ENCODE measurements at regions of chr16 and their contacts with region 1.

Region 1: GRCh38 chr16:3701531-3701930 is 15.8 kb downstream of the TRAP1 start:
- DNase-seq: no peak
- H3K4me3 Mint-ChIP-seq: no peak overlapping the region
- H3K27ac Mint-ChIP-seq: no peak overlapping the region
- H3K4me1 Mint-ChIP-seq: no peaks in the 10 kb centered on the region
- H3K27me3 Mint-ChIP-seq: no peaks in the 10 kb centered on the region

Region 2: DNA sequence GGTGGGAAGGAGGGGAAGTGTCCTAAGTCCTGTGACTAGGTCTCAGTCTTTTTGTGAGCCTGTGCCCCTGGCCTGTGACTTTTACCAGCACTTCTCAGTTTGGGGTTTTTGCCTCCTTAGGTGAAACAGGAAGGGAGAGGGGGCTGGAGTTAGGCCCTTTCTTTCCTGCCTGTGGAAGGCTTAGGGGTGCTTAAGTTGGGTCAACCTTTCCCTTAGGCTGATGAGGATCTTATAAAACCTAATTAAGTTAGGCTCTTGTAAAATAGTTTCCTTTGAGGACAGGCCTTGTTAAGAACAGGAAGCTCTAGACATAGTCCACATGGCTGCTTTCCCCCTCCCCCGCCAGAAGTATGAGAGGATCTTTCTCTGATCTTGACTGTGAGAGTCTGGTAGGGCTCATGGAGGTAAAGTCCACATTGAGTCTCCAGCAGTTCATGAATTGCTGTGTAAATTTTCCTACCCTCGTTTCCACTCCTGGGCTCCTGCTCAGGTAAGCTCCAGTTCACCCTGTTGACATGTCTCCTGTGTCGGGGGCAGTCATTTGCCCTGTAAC is 64.1 kb before region 1 on chr16:
- intact Hi-C with region 1: loop called (anchors 5 kb)
- DNase-seq: peak; percentile 18
- H3K4me3 Mint-ChIP-seq: no peak overlapping the region
- H3K27ac Mint-ChIP-seq: peak overlapping the region; percentile 86
- H3K4me1 Mint-ChIP-seq: peaks cover 12% of the 10 kb centered on the region
- H3K27me3 Mint-ChIP-seq: no peaks in the 10 kb centered on the region